ENCODE measurements at regions of chr17 and their contacts with region 1.

Region 1: GRCh38 chr17:19513897-19514488 is 19.7 kb upstream of the SLC47A1 start:
- H3K4me3 Mint-ChIP-seq: no peak overlapping the region
- H3K27ac Mint-ChIP-seq: no peak overlapping the region
- H3K4me1 Mint-ChIP-seq: peaks cover 5% of the 10 kb centered on the region
- H3K27me3 Mint-ChIP-seq: no peaks in the 10 kb centered on the region

Region 2: GRCh38 chr17:19546289-19547065 is 32.5 kb after region 1 on chr17:
- intact Hi-C with region 1: loop called (anchors 1 kb)
- H3K4me3 Mint-ChIP-seq: no peak overlapping the region
- H3K27ac Mint-ChIP-seq: peak overlapping the region; percentile 91
- H3K4me1 Mint-ChIP-seq: peaks cover 36% of the 10 kb centered on the region
- H3K27me3 Mint-ChIP-seq: no peaks in the 10 kb centered on the region

Region 3: GRCh38 chr17:19648475-19649406 is 134.7 kb after region 1 on chr17 and contains the start of gene ALDH3A2:
- intact Hi-C with region 1: loop called (anchors 1 kb)
- H3K4me3 Mint-ChIP-seq: peak within 1 kb of the TSS; percentile 98
- H3K27ac Mint-ChIP-seq: peak within 1 kb of the TSS; percentile 99
- H3K4me1 Mint-ChIP-seq: peaks cover 61% of the 10 kb centered on the region
- H3K27me3 Mint-ChIP-seq: no peaks in the 10 kb centered on the region

Region 4: DNA sequence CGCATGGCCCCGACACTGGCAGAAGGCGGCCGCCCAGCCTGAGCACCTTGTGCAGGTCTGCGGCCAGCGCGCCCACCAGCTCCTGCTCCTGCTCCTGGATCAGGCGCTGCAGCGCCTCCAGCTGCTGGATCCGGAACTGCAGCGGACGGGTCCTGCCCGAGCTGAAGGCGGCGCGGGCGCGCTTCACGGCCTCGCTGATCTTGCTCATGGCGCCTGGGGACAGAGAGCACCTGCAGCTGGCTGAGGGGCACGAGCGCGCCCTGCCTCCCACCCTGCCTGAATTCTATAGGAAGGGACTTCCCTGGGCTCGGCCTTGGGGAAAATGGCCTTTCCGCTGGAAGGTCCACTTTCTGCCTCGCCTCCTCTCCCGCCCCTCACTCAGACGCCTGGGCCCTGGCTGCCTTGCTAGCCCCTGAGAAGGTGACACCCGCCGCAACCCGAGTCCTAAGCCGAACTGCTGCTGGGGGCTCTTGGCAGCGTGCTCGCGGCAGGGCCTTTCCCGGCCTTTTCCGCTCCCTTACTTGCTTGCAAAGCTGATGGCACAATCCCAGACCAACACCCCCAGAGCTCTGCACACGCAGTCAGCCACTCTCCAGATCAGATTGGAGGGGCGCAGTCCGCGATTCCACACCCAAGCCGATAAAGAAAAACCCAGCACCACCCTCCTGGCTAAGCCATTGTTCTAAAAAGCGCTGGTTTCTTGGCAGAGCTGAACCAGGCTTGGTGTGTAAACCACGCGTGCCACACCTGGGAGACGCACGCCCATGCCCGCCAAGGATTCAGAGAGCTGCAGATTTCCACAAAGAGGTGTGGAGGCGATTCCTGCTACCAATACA is 231.1 kb after region 1 on chr17:
- intact Hi-C with region 1: loop called (anchors 5 kb)
- H3K4me3 Mint-ChIP-seq: peak overlapping the region; percentile 73
- H3K27ac Mint-ChIP-seq: peak overlapping the region; percentile 39
- H3K4me1 Mint-ChIP-seq: peaks cover 15% of the 10 kb centered on the region
- H3K27me3 Mint-ChIP-seq: peaks cover 17% of the 10 kb centered on the region

Region 5: GRCh38 chr17:19766422-19767270 is 252.7 kb after region 1 on chr17:
- intact Hi-C with region 1: loop called (anchors 1 kb)
- H3K4me3 Mint-ChIP-seq: no peak overlapping the region
- H3K27ac Mint-ChIP-seq: no peak overlapping the region
- H3K4me1 Mint-ChIP-seq: peaks cover 18% of the 10 kb centered on the region
- H3K27me3 Mint-ChIP-seq: peaks cover 13% of the 10 kb centered on the region